ENCODE measurements at regions of chr9 and their contacts with region 1.

Region 1: GRCh38 chr9:109903515-109904138 is 123.6 kb downstream of the PALM2AKAP2 start:
- DNase-seq: peak; percentile 55 to 87 (median 65)
- H3K4me3 ChIP-seq: no peak overlapping the region
- H3K27ac ChIP-seq: no peak overlapping the region
- H3K4me1 ChIP-seq: no peaks in the 10 kb centered on the region
- H3K27me3 ChIP-seq: no peaks in the 10 kb centered on the region
- CTCF ChIP-seq: peak; percentile 57 to 97 (median 86)
- POLR2A ChIP-seq: no peak

Region 2: GRCh38 chr9:109681301-109681700 is 222.3 kb before region 1 on chr9:
- intact Hi-C with region 1: no loop called
- DNase-seq: no peak
- H3K4me3 ChIP-seq: no peak overlapping the region
- H3K27ac ChIP-seq: no peak overlapping the region
- H3K4me1 ChIP-seq: no peaks in the 10 kb centered on the region
- H3K27me3 ChIP-seq: peaks cover 10% of the 10 kb centered on the region
- CTCF ChIP-seq: no peak
- POLR2A ChIP-seq: no peak

Region 3: GRCh38 chr9:110058304-110058953 is 154.8 kb after region 1 on chr9:
- intact Hi-C with region 1: loop called (anchors 5 to 10 kb)
- DNase-seq: peak; percentile 58 to 81 (median 67)
- H3K4me3 ChIP-seq: no peak overlapping the region
- H3K27ac ChIP-seq: no peak overlapping the region
- H3K4me1 ChIP-seq: peaks cover 0 to 5% of the 10 kb centered on the region in 2 donors
- H3K27me3 ChIP-seq: no peaks in the 10 kb centered on the region
- CTCF ChIP-seq: peak; percentile 31 to 77 (median 72)
- POLR2A ChIP-seq: no peak

Region 4: DNA sequence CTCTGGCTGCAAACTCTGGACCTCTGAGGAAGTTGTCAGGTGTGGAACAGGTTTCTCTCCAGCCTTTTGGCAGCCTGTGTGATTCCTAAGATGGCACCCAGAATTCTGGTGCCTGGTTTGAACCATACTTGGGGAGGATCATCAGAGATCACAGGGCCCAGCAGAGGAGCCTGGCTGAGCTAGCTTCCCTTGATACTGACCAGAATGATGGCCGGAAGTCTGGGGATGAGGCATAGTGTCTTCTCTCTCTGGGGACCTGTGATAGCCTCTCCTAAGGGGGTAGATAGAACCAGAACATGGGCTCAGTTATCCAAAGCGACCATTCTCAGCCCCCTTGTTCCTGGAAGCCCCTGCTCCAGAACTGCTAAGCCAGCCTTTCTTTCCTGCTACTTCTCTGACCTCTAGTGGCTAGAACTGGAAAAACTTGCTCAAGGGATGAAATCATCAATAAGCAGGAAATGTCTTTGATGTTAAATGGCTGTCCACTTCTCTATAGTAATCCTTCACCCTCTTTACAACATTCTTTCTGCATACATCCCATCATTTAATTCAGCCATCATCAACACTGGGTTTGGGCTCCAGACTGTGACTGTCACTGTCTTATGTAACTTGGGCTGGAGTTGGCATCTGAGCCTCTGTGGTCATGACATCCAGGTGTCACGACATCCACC is 249.2 kb after region 1 on chr9:
- intact Hi-C with region 1: loop called (anchors 5 to 10 kb)
- DNase-seq: no peak
- H3K4me3 ChIP-seq: no peak overlapping the region
- H3K27ac ChIP-seq: no peak overlapping the region
- H3K4me1 ChIP-seq: peaks cover 0 to 12% of the 10 kb centered on the region in 2 donors
- H3K27me3 ChIP-seq: no peaks in the 10 kb centered on the region
- CTCF ChIP-seq: peak; percentile 51 to 82 (median 71)
- POLR2A ChIP-seq: no peak